MCF 10A (cell line): ENCODE measurements at regions of chr17 and their contacts with region 1.

Region 1: DNA sequence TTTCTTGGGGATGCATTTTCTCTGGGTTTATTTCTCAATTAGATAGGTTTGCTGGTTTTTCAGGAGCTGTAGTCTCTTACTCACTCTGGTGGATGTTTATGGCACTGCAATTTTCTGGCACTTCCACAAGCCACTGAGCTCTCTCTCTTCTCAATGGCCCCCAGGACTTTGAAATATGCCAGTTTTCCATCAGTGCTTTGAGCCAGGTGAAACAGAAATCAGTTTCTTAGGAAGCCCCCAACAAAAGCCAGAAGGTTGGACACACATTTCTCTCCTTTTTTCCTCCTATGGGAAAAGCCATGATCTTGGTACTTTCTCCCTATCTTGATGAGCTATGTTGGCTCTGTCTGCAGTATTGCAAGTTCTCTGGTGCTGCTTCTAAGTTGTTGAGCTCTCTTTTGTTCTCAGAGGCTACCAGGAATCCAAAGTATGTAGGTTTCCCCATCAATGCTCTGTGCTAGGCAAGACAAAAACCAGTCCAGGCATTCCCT is 90.7 kb upstream of the SMIM36 start:
- DNase-seq: peak; percentile 57
- H3K4me3 Mint-ChIP-seq: no peak overlapping the region
- H3K27ac Mint-ChIP-seq: no peak overlapping the region
- H3K4me1 Mint-ChIP-seq: no peaks in the 10 kb centered on the region
- H3K27me3 Mint-ChIP-seq: no peaks in the 10 kb centered on the region
- CTCF ChIP-seq: peak; percentile 67

Region 2: DNA sequence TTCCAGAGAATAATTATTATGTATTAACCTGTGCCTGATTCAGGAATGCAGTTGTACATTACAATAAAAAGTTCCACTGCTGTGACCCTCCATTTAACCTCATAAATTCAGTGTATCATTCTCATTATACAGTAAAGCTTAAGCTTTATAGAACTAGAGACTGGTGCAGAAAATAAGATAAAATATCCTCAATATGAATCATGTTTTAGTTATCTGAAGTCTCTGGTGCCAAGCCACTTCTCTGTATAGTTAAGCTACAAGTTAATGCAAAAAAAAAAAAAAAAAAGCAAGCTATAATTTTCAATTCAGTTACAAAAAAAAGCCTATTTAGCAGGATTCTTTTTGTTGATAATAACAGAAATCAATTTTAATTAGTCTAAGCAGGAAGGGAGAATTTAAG is 68.3 kb before region 1 on chr17:
- CTCF ChIA-PET with region 1: interaction called, 231 read pairs
- POLR2A ChIA-PET with region 1: interaction called, 27 read pairs
- intact Hi-C with region 1: no loop called
- DNase-seq: no peak
- H3K4me3 Mint-ChIP-seq: no peak overlapping the region
- H3K27ac Mint-ChIP-seq: no peak overlapping the region
- H3K4me1 Mint-ChIP-seq: no peaks in the 10 kb centered on the region
- H3K27me3 Mint-ChIP-seq: no peaks in the 10 kb centered on the region
- CTCF ChIP-seq: no peak

Region 3: GRCh38 chr17:55576996-55577586 is 24.8 kb before region 1 on chr17:
- CTCF ChIA-PET with region 1: interaction called, 15 read pairs
- POLR2A ChIA-PET with region 1: no interaction called
- intact Hi-C with region 1: no loop called
- DNase-seq: no peak
- H3K4me3 Mint-ChIP-seq: no peak overlapping the region
- H3K27ac Mint-ChIP-seq: no peak overlapping the region
- H3K4me1 Mint-ChIP-seq: no peaks in the 10 kb centered on the region
- H3K27me3 Mint-ChIP-seq: no peaks in the 10 kb centered on the region
- CTCF ChIP-seq: no peak

Region 4: DNA sequence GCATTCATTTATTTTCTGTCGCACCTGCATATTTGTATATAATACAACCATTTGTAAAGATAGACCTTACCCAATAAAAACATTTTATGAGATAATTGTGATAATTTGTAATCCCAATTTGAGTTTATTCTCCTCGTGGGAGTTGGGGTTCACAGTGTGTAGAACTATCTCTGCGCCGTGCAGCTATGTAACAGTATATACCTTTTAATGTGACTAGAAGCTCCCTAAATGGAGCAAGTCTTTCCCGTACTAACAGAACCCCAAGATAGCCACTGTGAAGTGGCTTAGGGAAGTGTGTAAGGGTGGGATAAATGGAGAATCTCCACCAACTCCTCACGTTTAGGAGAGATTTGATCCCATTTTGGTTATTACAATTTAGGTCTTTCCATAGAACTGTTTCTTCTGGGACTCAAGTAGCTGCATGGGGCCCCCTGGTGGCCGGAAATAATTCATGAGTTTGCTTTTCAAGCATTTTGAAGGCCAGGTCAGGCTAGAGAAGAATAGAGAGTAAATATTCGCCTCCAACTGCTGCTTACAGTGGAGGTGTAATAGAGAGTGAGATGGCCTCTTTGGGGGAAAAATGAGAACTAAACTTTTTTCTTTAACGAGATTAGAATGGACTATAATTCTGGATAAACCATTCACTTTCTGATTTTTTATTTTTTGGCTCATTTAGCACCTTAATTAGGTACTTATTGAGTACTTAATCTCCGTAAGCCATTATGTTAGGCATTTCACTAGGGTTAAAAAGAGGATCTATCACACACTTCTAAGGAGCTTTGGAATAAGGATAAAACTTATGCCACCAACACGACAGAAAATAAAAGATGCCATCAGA is 116.2 kb after region 1 on chr17:
- CTCF ChIA-PET with region 1: interaction called, 30 read pairs
- POLR2A ChIA-PET with region 1: interaction called, 3 read pairs
- intact Hi-C with region 1: loop called (anchors 2 kb)
- DNase-seq: peak; percentile 80
- H3K4me3 Mint-ChIP-seq: no peak overlapping the region
- H3K27ac Mint-ChIP-seq: no peak overlapping the region
- H3K4me1 Mint-ChIP-seq: peaks cover 10% of the 10 kb centered on the region
- H3K27me3 Mint-ChIP-seq: no peaks in the 10 kb centered on the region
- CTCF ChIP-seq: peak; percentile 62

Region 5: DNA sequence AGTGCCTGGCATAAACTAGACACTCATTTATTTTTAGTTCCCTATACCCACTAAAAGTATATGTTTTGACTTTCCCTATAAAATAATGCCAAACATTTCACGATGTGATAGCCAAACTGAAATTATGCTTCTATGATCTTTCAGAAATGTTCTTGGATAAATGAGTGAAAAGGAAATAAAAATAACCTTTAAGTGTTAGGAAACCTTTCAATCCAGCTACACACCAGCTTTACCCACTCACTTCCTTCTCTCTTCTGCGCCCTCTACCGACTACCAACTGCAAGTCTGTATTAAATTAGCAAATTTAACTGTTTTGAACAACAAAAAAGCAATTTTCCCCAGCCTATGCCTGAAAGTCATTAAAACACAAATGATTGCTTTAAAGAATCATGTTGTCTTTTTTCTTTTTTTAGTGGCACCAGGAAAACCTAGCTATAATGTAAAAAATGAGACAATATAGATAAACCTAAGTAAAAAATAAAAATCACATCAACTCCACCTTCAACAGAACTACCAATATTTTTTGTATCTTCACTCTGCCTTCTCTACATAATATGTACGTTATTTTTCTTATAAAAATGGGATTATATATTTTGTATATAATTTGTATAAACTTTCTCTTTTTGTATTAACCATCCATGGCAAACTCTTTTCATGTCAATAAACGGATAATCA is 133.9 kb after region 1 on chr17:
- CTCF ChIA-PET with region 1: interaction called, 18 read pairs
- POLR2A ChIA-PET with region 1: no interaction called
- intact Hi-C with region 1: no loop called
- DNase-seq: peak; percentile 69
- H3K4me3 Mint-ChIP-seq: no peak overlapping the region
- H3K27ac Mint-ChIP-seq: no peak overlapping the region
- H3K4me1 Mint-ChIP-seq: peaks cover 41% of the 10 kb centered on the region
- H3K27me3 Mint-ChIP-seq: no peaks in the 10 kb centered on the region
- CTCF ChIP-seq: peak; percentile 50

Region 6: GRCh38 chr17:55996825-55997224 is 394.9 kb after region 1 on chr17:
- CTCF ChIA-PET with region 1: no interaction called
- POLR2A ChIA-PET with region 1: no interaction called
- intact Hi-C with region 1: no loop called
- DNase-seq: no peak
- H3K4me3 Mint-ChIP-seq: no peak overlapping the region
- H3K27ac Mint-ChIP-seq: no peak overlapping the region
- H3K4me1 Mint-ChIP-seq: no peaks in the 10 kb centered on the region
- H3K27me3 Mint-ChIP-seq: no peaks in the 10 kb centered on the region
- CTCF ChIP-seq: peak; percentile 15